ENCODE measurements at regions of chr3 and their contacts with region 1.

Region 1: DNA sequence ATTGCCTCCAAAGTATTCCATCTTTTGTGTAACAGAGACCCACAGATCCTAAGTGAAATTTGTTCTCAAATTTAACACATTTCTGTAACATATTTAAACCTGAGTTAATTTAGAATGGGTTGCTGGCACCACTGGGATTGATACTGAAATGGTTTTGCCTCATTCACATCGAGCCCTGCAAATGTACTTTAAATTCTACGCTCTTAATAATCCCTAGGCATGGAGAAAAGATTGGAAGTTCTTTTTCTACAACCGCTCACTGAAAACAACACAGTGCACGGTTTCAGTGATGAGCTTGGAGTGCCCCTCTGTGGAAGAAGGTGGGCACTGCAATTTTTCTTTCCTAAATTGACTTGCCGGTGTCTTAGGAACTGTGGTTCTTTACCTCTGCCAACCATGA is 109.9 kb upstream of the ATP11B start:
- DNase-seq: peak in 9 of 10 donors; percentile 35 to 85 (median 63)
- H3K4me3 ChIP-seq: peak overlapping the region in 58 of 59 donors; percentile 21 to 84 (median 72)
- H3K27ac ChIP-seq: peak overlapping the region in 55 of 59 donors; percentile 12 to 86 (median 75)
- H3K27me3 ChIP-seq: peaks cover 0 to 27% (median 2%) of the 10 kb centered on the region in 45 donors
- CTCF ChIP-seq: peak; percentile 76 to 99 (median 93)

Region 2: DNA sequence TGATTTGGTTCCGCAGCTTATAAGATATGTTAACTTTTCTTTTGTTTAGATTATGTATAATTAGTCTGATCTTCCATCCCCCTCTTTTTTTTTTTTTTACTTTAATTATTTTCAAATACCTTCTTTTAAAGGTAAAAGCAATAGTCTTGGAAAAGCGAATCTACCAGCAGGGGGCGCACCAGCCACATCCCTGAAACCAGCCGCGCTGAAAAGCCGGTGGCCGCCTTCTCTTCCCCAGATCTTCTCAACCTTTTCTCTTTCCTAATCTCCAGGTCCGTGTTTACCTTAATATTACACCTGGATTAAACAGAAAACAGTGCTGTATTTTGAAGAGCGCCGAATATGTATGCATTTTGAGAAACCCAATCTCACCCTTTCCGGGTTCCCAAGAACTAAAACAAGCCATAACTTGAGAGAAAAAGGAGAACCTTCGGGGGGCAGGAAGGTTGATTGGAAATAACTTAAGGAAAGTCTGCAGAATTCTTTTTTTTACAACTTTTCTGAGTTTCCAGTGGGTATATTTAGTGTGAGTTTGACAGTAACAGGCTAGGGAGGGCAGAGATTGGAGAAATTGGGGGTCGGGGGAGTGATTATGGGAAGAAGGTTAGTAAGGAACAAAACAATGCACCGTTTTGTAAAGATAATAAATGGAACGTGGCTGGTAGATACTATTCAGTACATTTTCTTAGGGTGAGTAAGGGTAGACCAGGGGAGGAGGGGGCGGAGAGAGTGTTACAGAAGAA is 973.7 kb before region 1 on chr3:
- intact Hi-C with region 1: loop called (anchors 5 kb)
- DNase-seq: peak in 9 of 10 donors; percentile 38 to 85 (median 77)
- H3K4me3 ChIP-seq: peak overlapping the region in 58 of 59 donors; percentile 4 to 93 (median 66)
- H3K27ac ChIP-seq: peak overlapping the region; percentile 7 to 100 (median 94)
- H3K27me3 ChIP-seq: peaks cover 0 to 99% (median 51%) of the 10 kb centered on the region in 45 donors
- CTCF ChIP-seq: peak; percentile 75 to 98 (median 88)